ENCODE measurements at regions of chr18 and their contacts with region 1.

Region 1: DNA sequence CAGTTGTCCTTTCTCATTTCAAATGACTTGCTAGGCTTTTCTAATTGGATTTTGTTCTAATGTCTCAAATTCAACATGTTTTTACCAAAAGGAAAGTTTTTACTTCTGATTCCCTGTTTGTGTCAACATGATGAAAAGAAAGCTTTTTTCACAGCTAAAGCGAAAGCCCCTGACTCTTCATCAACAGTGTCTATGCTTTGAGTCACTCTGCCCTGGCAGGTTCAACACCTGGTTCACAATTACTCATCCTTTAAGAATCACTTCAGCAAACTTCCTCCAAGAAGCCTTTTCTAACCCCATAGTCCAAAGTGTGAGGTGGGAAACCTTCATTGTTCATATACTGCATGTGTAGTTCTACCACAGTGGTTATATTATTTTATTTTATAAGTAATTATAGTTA is 7.6 kb upstream of the DSG2 start:
- DNase-seq: peak; percentile 49
- ATAC-seq: peak; percentile 92
- H3K4me3 ChIP-seq: no peak overlapping the region
- H3K27ac ChIP-seq: peak overlapping the region; percentile 9; the same call in 1 of the 2 replicates
- H3K4me1 ChIP-seq: peaks cover 7% of the 10 kb centered on the region
- H3K27me3 ChIP-seq: no peaks in the 10 kb centered on the region
- CTCF ChIP-seq: no peak
- EP300 ChIP-seq: peak; percentile 69 to 85; a peak in 3 of 4 replicates
- POLR2A ChIP-seq: no peak
- RAD21 ChIP-seq: no peak

Region 2: GRCh38 chr18:31512203-31512764 is 21.9 kb after region 1 on chr18:
- CTCF ChIA-PET with region 1: interaction called, 5 read pairs
- POLR2A ChIA-PET with region 1: no interaction called
- RAD21 ChIA-PET with region 1: interaction called, 3 read pairs
- SMC1A ChIA-PET with region 1: interaction called, 18 read pairs
- in situ Hi-C with region 1: no loop called
- intact Hi-C with region 1: no loop called
- DNase-seq: no peak
- ATAC-seq: no peak; the same call in 2 of the 3 replicates
- H3K4me3 ChIP-seq: no peak overlapping the region
- H3K27ac ChIP-seq: no peak overlapping the region
- H3K4me1 ChIP-seq: peaks cover 13% of the 10 kb centered on the region
- H3K27me3 ChIP-seq: no peaks in the 10 kb centered on the region
- CTCF ChIP-seq: no peak
- EP300 ChIP-seq: no peak
- POLR2A ChIP-seq: no peak
- RAD21 ChIP-seq: no peak

Region 3: GRCh38 chr18:31596081-31596872 is 105.9 kb after region 1 on chr18:
- CTCF ChIA-PET with region 1: no interaction called
- POLR2A ChIA-PET with region 1: no interaction called
- RAD21 ChIA-PET with region 1: no interaction called
- SMC1A ChIA-PET with region 1: no interaction called
- in situ Hi-C with region 1: no loop called
- intact Hi-C with region 1: no loop called
- DNase-seq: no peak
- ATAC-seq: no peak
- H3K4me3 ChIP-seq: no peak overlapping the region
- H3K27ac ChIP-seq: no peak overlapping the region
- H3K4me1 ChIP-seq: no peaks in the 10 kb centered on the region
- H3K27me3 ChIP-seq: no peaks in the 10 kb centered on the region
- CTCF ChIP-seq: no peak
- EP300 ChIP-seq: no peak
- POLR2A ChIP-seq: no peak
- RAD21 ChIP-seq: no peak